Activated naive CD8-positive, alpha-beta T cell treated with anti-CD3 and anti-CD28 coated beads, Interleukin-2, amount 10 ng/mL, durations not matched to agents 7 days and 5 days (primary cell): ENCODE measurements at regions of chr13 and their contacts with region 1.

Region 1: DNA sequence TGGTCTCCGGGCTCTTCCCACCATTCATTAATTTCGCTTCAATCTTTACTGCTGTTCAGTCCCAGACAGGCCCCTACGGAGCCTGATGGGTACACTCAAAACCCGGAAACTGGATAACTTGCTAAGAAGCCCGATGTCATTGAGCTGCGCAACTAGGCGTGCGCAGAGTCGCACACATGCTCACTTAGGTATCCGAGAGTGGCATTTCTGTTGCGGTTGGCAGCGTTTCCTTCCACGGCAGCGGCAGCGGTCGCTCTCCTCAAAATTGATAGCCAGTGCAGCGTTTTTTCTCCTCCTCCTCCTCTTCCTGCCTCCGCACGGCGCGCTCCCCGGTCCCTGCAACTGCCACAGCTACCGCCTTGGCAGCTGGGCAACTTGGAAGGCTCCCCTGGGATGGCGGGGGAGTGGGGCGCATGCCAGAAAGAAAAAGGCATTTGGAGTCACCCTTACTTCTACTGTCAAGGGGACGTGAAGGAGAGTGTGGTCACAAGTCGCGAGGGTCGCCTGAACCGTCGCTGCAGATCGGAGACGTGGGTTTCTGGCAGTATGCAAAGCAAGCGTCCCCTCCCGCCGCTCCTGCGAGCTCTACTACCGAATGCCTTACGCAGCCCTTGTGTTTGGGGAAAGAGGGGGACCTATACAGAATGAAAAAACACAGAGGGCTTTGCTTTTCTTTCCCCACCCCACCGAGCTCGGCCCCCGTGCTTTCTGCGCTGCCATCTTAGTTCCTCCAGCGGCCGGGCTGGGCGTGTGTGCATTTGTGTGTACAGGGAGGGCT is 2.4 kb upstream of the MYCBP2 start:
- DNase-seq: peak; percentile 88
- ATAC-seq: peak; percentile 77
- H3K4me3 Mint-ChIP-seq: peak overlapping the region; percentile 97
- H3K27ac Mint-ChIP-seq: peak overlapping the region; percentile 99
- H3K4me1 Mint-ChIP-seq: peaks cover 25% of the 10 kb centered on the region
- H3K27me3 Mint-ChIP-seq: peaks cover 5% of the 10 kb centered on the region

Region 2: DNA sequence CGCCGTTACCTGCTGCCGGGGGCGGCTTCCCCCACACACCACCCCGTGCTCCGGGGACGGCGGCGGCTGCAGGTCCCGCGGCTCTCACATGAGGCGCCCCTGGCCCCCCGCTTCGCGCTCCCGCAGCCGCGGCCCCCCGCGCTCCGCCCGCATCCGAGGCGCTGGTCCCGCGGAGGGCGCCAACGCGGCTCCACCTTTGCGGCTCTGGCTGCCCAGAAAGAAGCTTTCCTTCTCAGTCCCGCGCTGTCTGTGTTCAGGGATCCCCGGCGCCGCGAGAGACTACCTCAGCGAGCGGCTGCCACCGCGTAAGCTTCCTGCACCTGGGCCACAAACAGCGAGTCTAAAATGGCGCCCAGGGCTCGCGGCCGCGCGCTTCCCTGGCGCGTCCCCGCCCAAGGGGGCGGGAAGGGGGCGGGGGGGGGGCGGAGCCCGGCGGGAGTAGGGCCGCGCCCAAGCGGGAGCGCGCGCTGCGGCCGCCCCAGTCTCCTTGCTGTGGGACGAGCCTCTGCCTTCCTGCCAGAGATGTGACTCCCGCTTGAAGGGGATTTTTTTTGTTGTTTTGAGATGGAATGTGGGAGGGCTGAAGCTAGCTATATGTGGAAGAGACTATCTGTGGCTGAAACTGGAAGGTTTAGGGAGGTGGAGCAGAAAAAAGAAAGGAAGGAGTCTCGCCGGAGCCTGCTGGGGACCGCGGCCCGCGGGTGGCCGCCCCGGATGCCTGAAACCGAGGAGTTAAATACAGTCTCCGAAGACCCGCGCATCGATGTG is 302.3 kb before region 1 on chr13 and contains the start of gene FBXL3:
- POLR2A ChIA-PET with region 1: interaction called, 60 read pairs
- DNase-seq: peak; percentile 86
- ATAC-seq: peak; percentile 67
- H3K4me3 Mint-ChIP-seq: peak within 1 kb of the TSS; percentile 99
- H3K27ac Mint-ChIP-seq: peak within 1 kb of the TSS; percentile 97
- H3K4me1 Mint-ChIP-seq: peaks cover 35% of the 10 kb centered on the region
- H3K27me3 Mint-ChIP-seq: peaks cover 3% of the 10 kb centered on the region
- total RNA-seq, gene FBXL3: 46.1 to 47.7 TPM

Region 3: DNA sequence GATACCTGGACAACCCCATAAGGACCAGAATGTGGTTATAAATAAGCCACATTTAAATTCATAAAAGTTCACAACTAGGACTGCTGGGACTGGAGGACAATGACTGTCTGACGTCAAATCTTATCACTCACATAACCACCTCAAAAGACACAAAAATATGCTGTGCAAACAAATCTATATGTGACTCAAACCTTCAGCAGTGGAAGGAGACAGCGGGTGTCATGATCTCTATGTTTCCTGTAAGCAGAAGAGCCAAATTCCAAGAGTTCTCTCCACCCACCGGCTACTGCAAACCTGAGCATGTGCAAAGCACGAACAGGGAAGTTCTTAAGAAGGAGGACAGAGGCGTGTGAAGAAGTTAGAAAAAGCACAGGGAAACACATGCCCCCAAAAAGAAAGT is 115.7 kb before region 1 on chr13:
- POLR2A ChIA-PET with region 1: no interaction called
- DNase-seq: no peak
- ATAC-seq: no peak
- H3K4me3 Mint-ChIP-seq: no peak overlapping the region
- H3K27ac Mint-ChIP-seq: no peak overlapping the region
- H3K4me1 Mint-ChIP-seq: no peaks in the 10 kb centered on the region
- H3K27me3 Mint-ChIP-seq: no peaks in the 10 kb centered on the region

Region 4: GRCh38 chr13:77250975-77251374 is 78.3 kb before region 1 on chr13:
- POLR2A ChIA-PET with region 1: no interaction called
- DNase-seq: no peak
- ATAC-seq: no peak
- H3K4me3 Mint-ChIP-seq: no peak overlapping the region
- H3K27ac Mint-ChIP-seq: no peak overlapping the region
- H3K4me1 Mint-ChIP-seq: peaks cover 5% of the 10 kb centered on the region
- H3K27me3 Mint-ChIP-seq: no peaks in the 10 kb centered on the region

Region 5: DNA sequence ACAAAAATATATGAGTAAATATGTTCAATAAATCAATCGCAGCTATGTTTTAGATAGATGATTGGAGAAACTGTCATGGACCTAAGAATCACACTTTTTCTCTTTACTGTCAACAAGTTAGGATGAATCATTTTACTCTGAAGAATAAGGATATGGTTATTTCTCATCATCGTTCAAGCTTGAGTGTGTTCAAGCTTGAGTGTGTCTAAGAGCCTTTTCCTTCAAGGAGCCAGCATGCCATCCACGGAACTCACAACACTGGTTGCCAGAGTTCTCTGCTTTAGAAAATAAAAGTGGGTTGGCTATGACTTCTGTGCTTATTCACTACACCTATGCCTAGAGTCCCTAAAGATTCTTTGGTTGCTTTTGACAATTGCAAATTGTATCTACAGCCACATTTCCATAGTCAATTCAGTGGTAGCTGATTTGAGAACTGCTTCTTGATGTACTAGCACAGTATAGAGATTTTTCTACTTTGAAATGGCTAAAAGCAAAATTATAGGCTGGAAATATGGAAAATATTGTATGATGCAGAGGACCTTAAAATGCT is 148.1 kb after region 1 on chr13:
- POLR2A ChIA-PET with region 1: interaction called, 16 read pairs
- DNase-seq: no peak
- ATAC-seq: no peak
- H3K4me3 Mint-ChIP-seq: no peak overlapping the region
- H3K27ac Mint-ChIP-seq: no peak overlapping the region
- H3K4me1 Mint-ChIP-seq: peaks cover 6% of the 10 kb centered on the region
- H3K27me3 Mint-ChIP-seq: peaks cover 9% of the 10 kb centered on the region